Caco-2 (cell line): ENCODE measurements at regions of chr14 and their contacts with region 1.

Region 1: GRCh38 chr14:99415496-99416281 is 65.0 kb downstream of the SETD3 start:
- DNase-seq: peak; percentile 63 to 74
- H3K4me3 ChIP-seq: no peak overlapping the region
- H3K4me3 Mint-ChIP-seq: no peak overlapping the region
- H3K27ac Mint-ChIP-seq: peak overlapping the region; percentile 42
- H3K4me1 ChIP-seq: peaks cover 9% of the 10 kb centered on the region
- H3K4me1 Mint-ChIP-seq: peaks cover 10% of the 10 kb centered on the region
- H3K27me3 ChIP-seq: no peaks in the 10 kb centered on the region
- H3K27me3 Mint-ChIP-seq: no peaks in the 10 kb centered on the region
- CTCF ChIP-seq: peak; percentile 77

Region 2: DNA sequence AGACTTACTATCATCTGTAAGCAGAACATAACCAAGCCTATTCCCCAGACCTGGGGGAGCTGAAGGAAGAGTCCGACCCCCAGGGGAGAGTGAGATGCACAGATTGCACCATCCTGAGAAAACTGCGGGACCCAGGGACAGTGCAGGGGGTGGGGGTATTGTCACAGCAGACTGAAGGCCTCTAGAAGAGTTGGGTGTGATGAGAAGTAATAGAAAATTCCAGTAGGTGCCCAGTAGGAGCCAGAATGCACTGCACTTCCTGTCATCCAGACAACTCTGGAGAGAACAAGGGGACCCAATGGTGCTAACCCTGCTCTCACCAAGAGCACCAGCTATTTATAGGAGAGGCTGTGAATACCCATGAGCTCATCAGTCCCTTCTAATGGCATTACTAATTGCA is 333.8 kb before region 1 on chr14:
- CTCF ChIA-PET with region 1: no interaction called
- POLR2A ChIA-PET with region 1: no interaction called
- intact Hi-C with region 1: no loop called
- DNase-seq: no peak
- H3K4me3 ChIP-seq: no peak overlapping the region
- H3K4me3 Mint-ChIP-seq: no peak overlapping the region
- H3K27ac Mint-ChIP-seq: no peak overlapping the region
- H3K4me1 ChIP-seq: no peaks in the 10 kb centered on the region
- H3K4me1 Mint-ChIP-seq: no peaks in the 10 kb centered on the region
- H3K27me3 ChIP-seq: no peaks in the 10 kb centered on the region
- H3K27me3 Mint-ChIP-seq: peaks cover 2% of the 10 kb centered on the region
- CTCF ChIP-seq: no peak

Region 3: GRCh38 chr14:99271951-99272631 is 143.6 kb before region 1 on chr14 and contains the start of gene BCL11B:
- CTCF ChIA-PET with region 1: interaction called, 3 read pairs
- POLR2A ChIA-PET with region 1: no interaction called
- intact Hi-C with region 1: loop called (anchors 1 kb)
- DNase-seq: peak; percentile 51 to 68
- H3K4me3 ChIP-seq: peak within 1 kb of the TSS; percentile 52
- H3K4me3 Mint-ChIP-seq: peak within 1 kb of the TSS; percentile 69
- H3K27ac Mint-ChIP-seq: no peak within 1 kb of the TSS
- H3K4me1 ChIP-seq: peaks cover 20% of the 10 kb centered on the region
- H3K4me1 Mint-ChIP-seq: peaks cover 5% of the 10 kb centered on the region
- H3K27me3 ChIP-seq: peaks cover 5% of the 10 kb centered on the region
- H3K27me3 Mint-ChIP-seq: peaks cover 39% of the 10 kb centered on the region
- CTCF ChIP-seq: peak; percentile 16 to 40
- total RNA-seq, gene BCL11B: 0.05 TPM in 1 of 2 replicates, not detected in the other

Region 4: DNA sequence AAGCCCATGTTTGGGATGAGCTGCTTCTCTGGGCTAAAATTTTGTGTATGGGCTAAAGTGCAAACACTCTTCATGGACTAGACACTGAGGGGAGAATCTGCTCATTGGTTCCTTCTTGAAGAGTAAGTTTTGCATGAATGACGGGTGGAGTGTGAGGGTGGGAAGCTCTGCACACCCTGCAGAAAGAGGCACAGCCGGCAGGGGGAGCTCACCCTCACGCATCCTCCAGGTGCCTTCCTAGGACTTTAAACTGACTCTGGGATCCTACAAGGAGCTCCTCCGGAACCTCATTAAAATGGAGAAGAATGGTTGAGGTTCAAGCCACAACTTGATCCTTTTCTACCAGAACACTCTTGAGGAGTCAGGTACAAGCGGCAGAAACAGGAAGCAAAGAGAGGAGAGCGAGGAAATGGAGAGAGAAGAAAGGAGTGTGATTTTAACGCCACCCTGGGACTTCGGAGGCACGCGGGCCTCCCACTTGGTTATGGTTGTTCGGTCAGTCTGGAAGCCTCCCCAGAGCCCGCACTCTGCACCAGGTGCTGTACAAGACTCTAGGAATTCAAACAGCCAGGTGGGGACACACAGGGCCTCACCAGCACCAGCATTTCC is 22.5 kb before region 1 on chr14:
- CTCF ChIA-PET with region 1: interaction called, 15 read pairs
- POLR2A ChIA-PET with region 1: no interaction called
- intact Hi-C with region 1: loop called (anchors 1 kb)
- DNase-seq: peak; percentile 55 to 66
- H3K4me3 ChIP-seq: no peak overlapping the region
- H3K4me3 Mint-ChIP-seq: no peak overlapping the region
- H3K27ac Mint-ChIP-seq: no peak overlapping the region
- H3K4me1 ChIP-seq: no peaks in the 10 kb centered on the region
- H3K4me1 Mint-ChIP-seq: no peaks in the 10 kb centered on the region
- H3K27me3 ChIP-seq: no peaks in the 10 kb centered on the region
- H3K27me3 Mint-ChIP-seq: no peaks in the 10 kb centered on the region
- CTCF ChIP-seq: peak; percentile 77 to 84

Region 5: GRCh38 chr14:99467338-99468078 is 51.8 kb after region 1 on chr14:
- CTCF ChIA-PET with region 1: no interaction called
- POLR2A ChIA-PET with region 1: no interaction called
- intact Hi-C with region 1: no loop called
- DNase-seq: no peak
- H3K4me3 ChIP-seq: no peak overlapping the region
- H3K4me3 Mint-ChIP-seq: no peak overlapping the region
- H3K27ac Mint-ChIP-seq: no peak overlapping the region
- H3K4me1 ChIP-seq: peaks cover 7% of the 10 kb centered on the region
- H3K4me1 Mint-ChIP-seq: peaks cover 35% of the 10 kb centered on the region
- H3K27me3 ChIP-seq: no peaks in the 10 kb centered on the region
- H3K27me3 Mint-ChIP-seq: no peaks in the 10 kb centered on the region
- CTCF ChIP-seq: no peak